Naive thymus-derived CD4-positive, alpha-beta T cell (primary cell): ENCODE measurements at regions of chr4 and their contacts with region 1.

Region 1: GRCh38 chr4:94251094-94251493 is 43.4 kb downstream of the SMARCAD1 start:
- DNase-seq: no peak
- ATAC-seq: no peak
- H3K4me3 ChIP-seq: no peak overlapping the region
- H3K4me3 Mint-ChIP-seq: no peak overlapping the region
- H3K27ac ChIP-seq: no peak overlapping the region
- H3K27ac Mint-ChIP-seq: no peak overlapping the region
- H3K4me1 ChIP-seq: no peaks in the 10 kb centered on the region
- H3K4me1 Mint-ChIP-seq: peaks cover 0 to 9% (median 0%) of the 10 kb centered on the region in 7 donors
- H3K27me3 ChIP-seq: no peaks in the 10 kb centered on the region
- H3K27me3 Mint-ChIP-seq: no peaks in the 10 kb centered on the region

Region 2: GRCh38 chr4:92735031-92735665 is 1515.9 kb before region 1 on chr4:
- CTCF ChIA-PET with region 1: no interaction called
- POLR2A ChIA-PET with region 1: no interaction called
- intact Hi-C with region 1: no loop called
- DNase-seq: no peak
- ATAC-seq: no peak
- H3K4me3 ChIP-seq: no peak overlapping the region
- H3K4me3 Mint-ChIP-seq: no peak overlapping the region
- H3K27ac ChIP-seq: no peak overlapping the region
- H3K27ac Mint-ChIP-seq: no peak overlapping the region
- H3K4me1 ChIP-seq: no peaks in the 10 kb centered on the region
- H3K4me1 Mint-ChIP-seq: no peaks in the 10 kb centered on the region
- H3K27me3 ChIP-seq: no peaks in the 10 kb centered on the region
- H3K27me3 Mint-ChIP-seq: no peaks in the 10 kb centered on the region

Region 3: DNA sequence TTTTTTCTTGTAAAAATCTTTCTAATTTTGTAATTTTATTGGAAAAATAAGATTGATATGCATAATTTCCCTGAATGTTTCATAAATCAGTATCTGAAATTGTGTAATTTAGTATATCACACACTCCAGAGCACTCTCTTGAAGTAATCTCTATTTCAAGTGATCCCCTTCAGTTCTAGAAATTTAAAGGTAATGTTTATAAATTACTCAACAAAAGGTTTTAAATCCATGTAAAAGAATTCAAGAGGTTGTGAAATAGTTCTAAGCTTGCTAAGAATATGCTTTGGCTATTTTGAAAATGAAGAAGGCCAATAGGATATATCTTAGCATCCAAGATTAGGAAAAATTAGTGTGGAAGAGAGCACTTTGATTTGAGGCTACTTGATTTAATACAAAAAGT is 15.3 kb before region 1 on chr4:
- CTCF ChIA-PET with region 1: interaction called, 4 read pairs
- POLR2A ChIA-PET with region 1: no interaction called
- intact Hi-C with region 1: loop called in 1 of 2 experiments (anchors 2 kb)
- DNase-seq: no peak
- ATAC-seq: no peak
- H3K4me3 ChIP-seq: no peak overlapping the region
- H3K4me3 Mint-ChIP-seq: no peak overlapping the region
- H3K27ac ChIP-seq: no peak overlapping the region
- H3K27ac Mint-ChIP-seq: peak overlapping the region in 2 of 9 donors; percentile 18 to 25
- H3K4me1 ChIP-seq: no peaks in the 10 kb centered on the region
- H3K4me1 Mint-ChIP-seq: peaks cover 0 to 3% (median 2%) of the 10 kb centered on the region in 7 donors
- H3K27me3 ChIP-seq: no peaks in the 10 kb centered on the region
- H3K27me3 Mint-ChIP-seq: no peaks in the 10 kb centered on the region

Region 4: DNA sequence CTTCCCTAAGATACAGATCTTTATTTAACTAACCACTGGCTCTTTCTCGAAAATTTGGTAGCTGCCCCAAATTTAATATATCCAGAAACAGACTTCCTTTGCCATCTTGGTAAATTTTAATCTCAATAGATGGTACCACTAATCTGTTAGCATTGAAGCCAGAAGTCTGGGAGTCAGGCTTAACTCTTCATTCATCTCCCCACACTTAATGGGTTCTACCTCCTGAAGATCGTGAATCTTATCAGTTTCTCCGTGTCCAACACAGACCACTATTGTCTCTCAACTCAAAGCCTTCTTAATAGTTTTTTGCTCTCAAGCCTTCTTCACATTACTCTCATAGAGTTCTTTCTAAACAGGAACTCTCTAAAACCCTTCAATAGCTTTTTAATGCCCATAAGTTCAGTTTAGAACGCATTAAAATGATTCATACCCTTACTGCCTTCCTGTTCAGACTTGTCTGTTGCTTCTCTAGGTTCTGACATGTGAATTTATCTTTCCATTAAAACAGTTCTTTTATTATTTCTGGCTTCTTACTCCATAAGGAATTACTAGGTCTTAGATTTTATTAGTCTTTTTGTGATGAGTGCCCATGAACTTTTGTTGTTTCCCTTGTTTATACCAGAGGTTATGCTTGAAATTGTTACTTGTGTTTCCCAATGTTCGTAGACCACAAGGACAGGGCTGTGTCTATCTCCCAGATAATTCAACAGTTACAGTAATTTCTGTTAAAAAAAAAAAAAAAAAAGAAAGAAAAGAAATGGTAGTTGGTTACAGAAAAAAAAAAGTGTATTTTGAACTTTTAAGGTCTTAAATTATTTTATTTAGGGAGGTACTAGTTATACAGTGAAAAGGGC is 11.3 kb after region 1 on chr4:
- CTCF ChIA-PET with region 1: no interaction called
- POLR2A ChIA-PET with region 1: interaction called, 3 read pairs
- intact Hi-C with region 1: loop called in 1 of 2 experiments (anchors 2 kb)
- DNase-seq: no peak
- ATAC-seq: no peak
- H3K4me3 ChIP-seq: no peak overlapping the region
- H3K4me3 Mint-ChIP-seq: no peak overlapping the region
- H3K27ac ChIP-seq: no peak overlapping the region
- H3K27ac Mint-ChIP-seq: no peak overlapping the region
- H3K4me1 ChIP-seq: no peaks in the 10 kb centered on the region
- H3K4me1 Mint-ChIP-seq: peaks cover 0 to 10% (median 4%) of the 10 kb centered on the region in 7 donors
- H3K27me3 ChIP-seq: no peaks in the 10 kb centered on the region
- H3K27me3 Mint-ChIP-seq: no peaks in the 10 kb centered on the region